ENCODE measurements at regions of chr3 and their contacts with region 1.

Region 1: GRCh38 chr3:126982471-126983175 is at the start of gene PLXNA1:
- DNase-seq: peak; percentile 97
- H3K4me3 Mint-ChIP-seq: peak within 1 kb of the TSS; percentile 89
- H3K27ac Mint-ChIP-seq: peak within 1 kb of the TSS; percentile 92
- H3K4me1 Mint-ChIP-seq: peaks cover 22% of the 10 kb centered on the region
- H3K27me3 Mint-ChIP-seq: peaks cover 9% of the 10 kb centered on the region
- total RNA-seq, gene PLXNA1: 21.3 and 24.0 TPM in 2 replicates

Region 2: GRCh38 chr3:126679318-126679751 is 303.3 kb before region 1 on chr3:
- intact Hi-C with region 1: loop called (anchors 10 kb)
- DNase-seq: peak; percentile 93
- H3K4me3 Mint-ChIP-seq: no peak overlapping the region
- H3K27ac Mint-ChIP-seq: no peak overlapping the region
- H3K4me1 Mint-ChIP-seq: peaks cover 3% of the 10 kb centered on the region
- H3K27me3 Mint-ChIP-seq: peaks cover 19% of the 10 kb centered on the region

Region 3: DNA sequence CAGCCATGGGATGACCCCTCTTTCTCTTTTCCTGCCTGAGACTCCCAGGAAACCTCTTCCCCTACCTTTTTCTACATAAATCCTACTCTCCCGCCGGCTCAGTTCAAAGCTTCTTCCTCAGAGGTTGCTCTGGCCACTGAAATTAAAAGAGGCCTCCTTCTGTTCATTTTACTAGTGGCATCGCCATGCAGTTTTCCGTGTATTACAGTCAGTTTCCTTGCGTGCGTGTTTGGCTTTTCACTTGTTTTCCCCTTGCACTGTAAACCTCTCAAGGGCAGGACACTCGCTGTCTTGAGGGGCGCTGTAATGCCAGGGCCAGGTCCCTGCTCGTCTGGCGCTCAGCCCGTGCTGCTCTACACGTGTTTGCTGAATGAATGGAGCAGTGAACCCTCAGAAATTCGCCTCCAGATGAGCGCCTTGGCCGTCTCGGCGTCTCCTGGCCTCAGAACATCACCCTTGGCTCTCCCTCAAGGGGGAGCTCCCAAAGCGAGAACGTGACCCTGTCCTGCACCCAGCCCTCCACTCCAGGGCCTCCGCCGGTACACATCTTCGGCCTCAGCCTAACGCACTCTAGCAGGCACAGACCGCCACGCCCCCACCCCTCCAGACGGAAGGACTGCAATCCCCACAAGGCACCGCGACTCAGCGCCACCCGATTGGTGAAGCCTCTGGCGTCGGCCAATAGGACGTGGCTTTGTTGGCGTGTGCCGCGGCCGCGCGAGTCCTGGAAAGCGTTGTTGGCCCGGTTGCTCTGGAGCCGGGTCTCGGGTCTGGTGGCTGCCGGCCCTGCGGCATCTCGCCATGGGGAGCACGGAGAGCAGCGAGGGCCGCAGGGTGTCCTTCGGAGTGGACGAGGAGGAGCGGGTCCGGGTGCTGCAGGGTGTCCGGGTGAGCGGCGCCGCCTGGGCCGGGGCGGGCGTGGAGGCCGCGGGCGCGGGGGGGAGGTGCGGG is 278.8 kb before region 1 on chr3 and contains the start of gene CHCHD6:
- intact Hi-C with region 1: loop called (anchors 1 kb)
- DNase-seq: peak; percentile 99
- H3K4me3 Mint-ChIP-seq: peak within 1 kb of the TSS; percentile 98
- H3K27ac Mint-ChIP-seq: peak within 1 kb of the TSS; percentile 92
- H3K4me1 Mint-ChIP-seq: peaks cover 15% of the 10 kb centered on the region
- H3K27me3 Mint-ChIP-seq: peaks cover 36% of the 10 kb centered on the region
- total RNA-seq, gene CHCHD6: 17.1 and 18.5 TPM in 2 replicates

Region 4: GRCh38 chr3:126752303-126752842 is 230.2 kb before region 1 on chr3:
- intact Hi-C with region 1: loop called (anchors 2 kb)
- DNase-seq: peak; percentile 88
- H3K4me3 Mint-ChIP-seq: no peak overlapping the region
- H3K27ac Mint-ChIP-seq: no peak overlapping the region
- H3K4me1 Mint-ChIP-seq: peaks cover 6% of the 10 kb centered on the region
- H3K27me3 Mint-ChIP-seq: no peaks in the 10 kb centered on the region

Region 5: GRCh38 chr3:126911162-126912026 is 71.2 kb before region 1 on chr3:
- intact Hi-C with region 1: loop called (anchors 1 kb)
- DNase-seq: peak; percentile 92
- H3K4me3 Mint-ChIP-seq: peak overlapping the region; percentile 80
- H3K27ac Mint-ChIP-seq: peak overlapping the region; percentile 91
- H3K4me1 Mint-ChIP-seq: peaks cover 48% of the 10 kb centered on the region
- H3K27me3 Mint-ChIP-seq: no peaks in the 10 kb centered on the region

Region 6: GRCh38 chr3:127096256-127097071 is 113.8 kb after region 1 on chr3:
- intact Hi-C with region 1: no loop called
- DNase-seq: no peak
- H3K4me3 Mint-ChIP-seq: no peak overlapping the region
- H3K27ac Mint-ChIP-seq: no peak overlapping the region
- H3K4me1 Mint-ChIP-seq: no peaks in the 10 kb centered on the region
- H3K27me3 Mint-ChIP-seq: no peaks in the 10 kb centered on the region

Region 7: GRCh38 chr3:127490271-127491023 is 507.8 kb after region 1 on chr3:
- intact Hi-C with region 1: no loop called
- DNase-seq: no peak
- H3K4me3 Mint-ChIP-seq: no peak overlapping the region
- H3K27ac Mint-ChIP-seq: no peak overlapping the region
- H3K4me1 Mint-ChIP-seq: no peaks in the 10 kb centered on the region
- H3K27me3 Mint-ChIP-seq: peaks cover 14% of the 10 kb centered on the region

Measured in activated CD4-positive, alpha-beta T cell treated with anti-CD3 and anti-CD28 coated beads, Interleukin-2, amount 10 ng/mL, durations not matched to agents 24 days and 14 days (primary cell).